Activated B cell treated with CpG ODN at 0.5 μM for 24 hours (primary cell): ENCODE measurements at regions of chr14 and their contacts with region 1.

Region 1: DNA sequence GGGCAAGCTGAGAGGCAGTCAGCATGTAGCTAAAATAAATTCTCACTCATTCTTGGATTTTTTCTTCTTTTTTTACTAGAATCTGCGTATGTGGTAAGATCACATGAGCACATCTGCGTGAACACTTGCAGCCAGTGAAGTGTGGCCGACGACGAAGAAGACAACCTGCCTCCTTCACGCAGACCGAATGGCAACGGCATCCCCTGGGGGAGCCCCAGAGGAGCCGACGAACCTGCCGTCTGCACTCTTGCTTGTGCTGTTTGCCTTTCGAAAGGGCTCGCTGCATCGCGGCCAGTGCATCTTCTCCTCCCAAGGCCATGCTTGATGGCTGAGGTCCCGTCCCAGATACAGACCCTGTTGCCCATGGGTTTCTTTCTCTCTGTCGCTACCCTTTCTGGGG is 113.8 kb downstream of the KCNK10 start:
- DNase-seq: peak; percentile 43
- ATAC-seq: peak; percentile 86
- H3K4me3 Mint-ChIP-seq: peak overlapping the region; percentile 79
- H3K27ac Mint-ChIP-seq: peak overlapping the region; percentile 92
- H3K4me1 Mint-ChIP-seq: peaks cover 42% of the 10 kb centered on the region
- H3K27me3 Mint-ChIP-seq: peaks cover 5% of the 10 kb centered on the region
- CTCF ChIP-seq: no peak

Region 2: DNA sequence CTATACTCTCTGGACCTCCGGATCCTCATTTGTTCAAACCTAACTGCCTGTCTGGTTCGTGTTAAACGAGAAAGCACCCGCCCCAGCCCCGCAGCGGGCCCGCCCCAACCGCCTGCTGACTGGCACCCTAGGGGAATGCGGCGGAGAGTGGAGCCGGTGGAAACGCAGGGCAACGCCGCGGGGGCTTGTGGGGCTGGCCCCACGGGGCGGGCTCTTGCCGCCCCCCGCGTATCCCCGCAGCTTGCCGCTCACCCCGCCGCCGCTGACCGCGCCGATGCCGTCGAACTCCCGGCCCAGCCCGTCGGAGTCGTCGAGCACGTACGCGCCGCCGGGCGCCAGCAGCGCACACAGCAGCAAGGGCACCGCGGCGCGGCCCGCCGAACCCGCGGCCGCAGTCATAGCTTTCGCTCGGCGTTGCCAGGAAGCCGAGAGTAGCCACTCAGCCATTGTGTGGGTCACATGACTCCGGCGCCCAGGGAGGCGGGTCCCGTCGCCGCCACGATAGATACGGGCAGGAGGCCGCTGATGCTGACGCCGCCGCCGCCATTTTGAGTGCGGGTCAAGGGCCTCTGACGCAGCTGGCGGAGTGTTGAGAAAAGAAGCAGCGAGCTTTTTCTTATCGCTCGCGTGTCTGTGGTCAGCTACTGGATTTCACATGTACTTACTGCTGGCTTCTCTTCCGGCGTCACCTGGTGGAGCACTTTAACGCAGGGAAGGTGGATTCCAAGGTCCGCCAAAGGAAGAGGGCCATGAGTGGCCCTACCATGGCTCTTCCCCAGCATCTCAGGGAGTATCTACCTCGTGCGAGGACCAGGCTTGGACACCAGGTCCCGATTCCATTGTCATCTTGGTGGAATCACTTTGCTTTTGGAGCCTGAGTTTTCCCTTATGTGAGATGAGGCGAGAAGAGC is 216.3 kb before region 1 on chr14 and contains the start of gene GALC:
- CTCF ChIA-PET with region 1: no interaction called
- POLR2A ChIA-PET with region 1: interaction called, 5 read pairs
- intact Hi-C with region 1: loop called (anchors 1 kb)
- DNase-seq: peak; percentile 89
- ATAC-seq: peak; percentile 80
- H3K4me3 Mint-ChIP-seq: peak within 1 kb of the TSS; percentile 89
- H3K27ac Mint-ChIP-seq: peak within 1 kb of the TSS; percentile 99
- H3K4me1 Mint-ChIP-seq: peaks cover 41% of the 10 kb centered on the region
- H3K27me3 Mint-ChIP-seq: no peaks in the 10 kb centered on the region
- CTCF ChIP-seq: no peak
- total RNA-seq, gene GALC: 8.3 and 9.7 TPM in 2 replicates

Region 3: DNA sequence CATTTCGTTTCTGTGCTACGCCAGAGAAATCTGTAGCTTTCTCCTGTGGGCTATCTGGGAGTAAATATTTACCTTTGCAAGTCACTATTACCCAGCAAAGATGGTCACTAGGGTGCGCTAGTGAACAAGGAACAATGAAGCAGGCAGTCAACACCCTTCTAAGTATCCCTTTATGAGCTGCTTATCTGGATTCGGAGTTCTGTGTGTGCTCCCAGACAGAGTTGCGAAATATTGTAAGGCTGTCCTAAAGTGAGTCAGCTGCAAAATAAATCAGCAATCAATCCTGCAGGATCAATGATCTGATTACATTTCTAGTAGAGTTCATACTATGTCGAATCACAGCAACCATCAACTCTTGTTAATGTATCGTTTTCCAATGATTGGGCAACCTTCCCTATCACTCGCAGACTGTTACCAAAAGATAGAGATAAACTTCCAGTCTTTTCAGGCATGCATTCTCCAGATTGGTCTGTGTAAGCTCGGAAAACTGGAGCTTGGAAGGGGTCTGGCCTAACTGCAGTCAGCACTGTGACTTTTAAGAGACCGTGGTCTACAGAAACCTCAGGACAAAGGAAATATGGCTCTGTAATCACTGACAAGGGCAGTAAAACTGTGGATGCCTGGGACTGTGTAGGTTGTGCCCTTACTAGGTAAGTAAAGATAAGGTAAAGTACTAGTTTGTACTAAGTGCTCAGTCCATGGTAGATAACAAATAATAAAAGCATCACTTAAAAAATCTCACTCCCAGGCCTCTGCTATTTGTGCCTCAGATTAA is 19.7 kb before region 1 on chr14:
- CTCF ChIA-PET with region 1: interaction called, 5 read pairs
- POLR2A ChIA-PET with region 1: interaction called, 8 read pairs
- intact Hi-C with region 1: loop called (anchors 1 kb)
- DNase-seq: no peak
- ATAC-seq: peak; percentile 71
- H3K4me3 Mint-ChIP-seq: peak overlapping the region; percentile 56
- H3K27ac Mint-ChIP-seq: no peak overlapping the region
- H3K4me1 Mint-ChIP-seq: peaks cover 7% of the 10 kb centered on the region
- H3K27me3 Mint-ChIP-seq: peaks cover 8% of the 10 kb centered on the region
- CTCF ChIP-seq: no peak

Region 4: DNA sequence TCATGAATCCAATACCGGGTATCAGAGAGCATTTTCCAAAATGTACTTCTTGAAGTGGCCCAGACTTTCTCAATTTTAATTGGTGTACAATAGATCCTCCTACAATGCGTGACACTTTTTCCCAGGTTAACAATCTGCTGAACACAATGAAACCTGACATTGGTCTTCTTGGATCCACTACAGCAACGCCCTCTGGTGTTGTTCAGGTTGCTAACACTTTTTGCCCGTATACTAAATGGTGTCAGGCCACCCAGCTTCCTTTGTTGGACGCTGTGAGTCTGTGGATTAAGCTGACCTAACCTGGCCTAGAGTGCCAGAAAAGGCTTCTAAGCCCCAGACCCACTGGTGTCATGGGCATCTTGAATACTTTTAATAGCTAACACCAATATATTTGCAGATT is 24.6 kb after region 1 on chr14:
- CTCF ChIA-PET with region 1: interaction called, 4 read pairs
- POLR2A ChIA-PET with region 1: interaction called, 3 read pairs
- intact Hi-C with region 1: loop called (anchors 1 kb)
- DNase-seq: no peak
- ATAC-seq: no peak
- H3K4me3 Mint-ChIP-seq: no peak overlapping the region
- H3K27ac Mint-ChIP-seq: no peak overlapping the region
- H3K4me1 Mint-ChIP-seq: no peaks in the 10 kb centered on the region
- H3K27me3 Mint-ChIP-seq: peaks cover 11% of the 10 kb centered on the region
- CTCF ChIP-seq: no peak

Region 5: GRCh38 chr14:88385345-88386101 is 176.2 kb after region 1 on chr14 and contains the start of gene SPATA7:
- CTCF ChIA-PET with region 1: no interaction called
- POLR2A ChIA-PET with region 1: no interaction called
- intact Hi-C with region 1: loop called (anchors 1 kb)
- DNase-seq: peak; percentile 71
- ATAC-seq: peak; percentile 94
- H3K4me3 Mint-ChIP-seq: peak within 1 kb of the TSS; percentile 94
- H3K27ac Mint-ChIP-seq: peak within 1 kb of the TSS; percentile 68
- H3K4me1 Mint-ChIP-seq: peaks cover 15% of the 10 kb centered on the region
- H3K27me3 Mint-ChIP-seq: peaks cover 2% of the 10 kb centered on the region
- CTCF ChIP-seq: no peak
- total RNA-seq, gene SPATA7: 1.4 and 1.6 TPM in 2 replicates